ENCODE measurements at regions of chr7 and their contacts with region 1.

Region 1: DNA sequence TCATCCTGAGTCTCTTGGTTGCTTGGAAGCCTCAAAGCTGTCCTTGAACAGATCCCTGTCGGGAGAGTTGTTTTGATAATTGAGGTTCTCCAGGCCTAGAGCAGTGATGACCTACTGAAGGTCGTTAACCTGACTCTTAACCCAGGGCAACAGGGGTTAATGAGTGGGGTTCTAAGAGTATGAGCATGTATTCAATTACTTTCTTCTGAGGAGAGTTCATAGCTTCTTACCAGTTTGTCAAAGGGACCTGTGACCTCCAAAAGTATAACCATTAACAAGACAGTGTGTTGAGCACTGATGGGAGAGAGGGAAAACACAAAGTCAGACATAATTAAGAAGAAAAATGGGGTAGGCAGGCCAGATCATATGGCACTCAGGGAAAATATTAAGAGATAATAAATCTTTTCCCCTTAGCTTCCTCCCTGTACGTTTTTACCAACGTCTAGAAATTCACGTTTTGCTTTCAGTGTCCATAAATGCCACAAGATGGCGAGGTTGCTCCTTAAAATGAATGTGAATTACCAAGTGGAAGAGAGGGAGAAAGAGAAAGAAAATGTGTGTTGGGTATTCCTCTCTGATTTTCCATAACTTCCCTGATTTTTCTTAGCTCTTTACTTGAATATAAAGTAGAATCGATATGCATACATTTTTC is 97.6 kb downstream of the SUGCT start:
- DNase-seq: peak; percentile 34
- CTCF ChIP-seq: peak; percentile 64

Region 2: DNA sequence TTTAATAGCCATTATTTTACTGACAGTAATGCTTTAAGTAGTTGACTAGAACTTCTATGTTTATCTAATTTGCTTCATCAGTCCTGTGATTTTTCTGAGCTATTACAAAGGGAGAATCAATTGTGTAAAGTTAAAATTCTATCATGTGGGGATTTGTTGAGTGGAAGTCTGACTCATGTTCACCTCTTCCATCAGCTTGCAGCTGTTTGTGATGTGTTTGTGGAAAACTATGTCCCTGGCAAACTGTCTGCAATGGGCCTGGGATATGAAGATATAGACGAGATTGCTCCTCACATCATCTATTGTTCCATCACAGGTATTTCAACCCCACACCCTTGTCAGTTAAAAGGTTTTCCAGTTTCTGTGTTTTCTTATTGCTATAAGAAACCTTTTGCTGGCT is 37.6 kb before region 1 on chr7:
- CTCF ChIA-PET with region 1: no interaction called
- POLR2A ChIA-PET with region 1: no interaction called
- DNase-seq: no peak
- CTCF ChIP-seq: no peak

Region 3: GRCh38 chr7:40221836-40222235 is 10.5 kb before region 1 on chr7:
- CTCF ChIA-PET with region 1: interaction called, 17 read pairs
- POLR2A ChIA-PET with region 1: no interaction called
- DNase-seq: no peak
- CTCF ChIP-seq: no peak

Region 4: DNA sequence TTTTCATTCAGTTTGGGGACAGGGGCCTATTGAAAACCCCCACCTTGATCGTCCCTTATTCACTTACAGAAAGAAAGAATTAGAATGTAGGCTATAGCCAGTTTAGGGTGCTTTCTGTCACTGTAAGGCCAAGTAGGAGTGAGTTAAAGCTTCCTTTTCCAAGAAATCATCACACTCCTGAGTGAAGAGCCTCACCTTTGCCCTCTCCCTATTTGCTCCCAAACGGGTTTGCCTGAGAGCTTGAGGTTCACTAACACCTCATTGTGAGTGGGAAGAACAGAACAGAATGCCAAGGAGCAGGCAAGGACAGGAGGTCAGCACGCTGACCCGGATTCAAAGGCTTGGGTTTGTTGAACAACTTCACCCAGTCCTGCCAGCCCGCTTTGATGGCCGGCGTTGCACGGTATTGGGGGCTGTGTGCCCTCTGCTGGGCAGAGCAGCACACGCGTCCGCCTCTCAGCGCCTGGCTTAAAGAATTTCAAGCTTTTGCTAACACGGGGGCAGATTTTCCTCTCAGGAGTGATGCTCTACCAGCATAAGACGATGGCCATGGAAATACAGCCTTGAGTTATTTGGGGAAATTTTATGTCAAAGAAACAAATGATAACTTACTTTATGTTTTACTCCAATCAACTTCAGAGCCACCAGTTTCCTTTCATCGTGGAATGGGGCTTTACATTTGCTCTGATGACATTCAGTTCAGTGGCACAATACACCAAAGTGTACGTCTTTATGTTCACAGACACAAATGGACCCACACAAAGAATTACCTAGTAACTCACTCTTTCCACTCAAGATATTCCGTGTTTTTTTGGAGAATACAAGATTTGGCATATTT is 372.5 kb after region 1 on chr7:
- CTCF ChIA-PET with region 1: interaction called, 13 read pairs
- POLR2A ChIA-PET with region 1: no interaction called
- DNase-seq: peak; percentile 41
- CTCF ChIP-seq: peak; percentile 67

Region 5: GRCh38 chr7:40621592-40621998 is 389.2 kb after region 1 on chr7:
- CTCF ChIA-PET with region 1: no interaction called
- POLR2A ChIA-PET with region 1: no interaction called
- DNase-seq: no peak
- CTCF ChIP-seq: no peak

Region 6: DNA sequence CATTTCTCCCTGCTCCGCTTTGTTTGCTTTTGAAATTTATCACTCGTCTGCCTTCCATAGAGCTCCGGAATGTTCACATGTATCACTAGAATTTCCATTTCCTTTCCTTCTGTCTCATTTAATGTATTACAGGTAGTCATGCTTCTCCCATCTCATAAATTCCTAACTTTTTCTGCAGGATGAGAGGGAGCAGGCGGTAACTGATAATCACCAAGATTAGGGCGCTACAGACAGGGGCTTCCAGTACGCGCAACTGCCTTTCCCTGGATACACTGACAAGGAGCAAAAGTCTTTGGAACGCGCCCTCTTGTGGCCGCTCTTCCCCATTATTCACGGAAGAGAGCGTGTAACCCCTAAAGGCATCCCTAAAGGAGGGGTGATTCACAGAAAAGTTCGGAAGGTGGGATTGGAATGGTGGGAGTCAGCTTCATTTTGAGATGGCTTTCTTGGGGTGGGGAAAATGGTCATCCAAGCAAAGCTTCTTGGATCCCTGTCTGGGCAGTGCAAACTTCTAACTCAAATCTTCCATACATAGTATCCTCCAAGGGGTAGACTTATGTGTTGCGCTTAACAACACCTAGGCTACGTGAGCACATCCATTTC is 1464.0 kb after region 1 on chr7:
- CTCF ChIA-PET with region 1: interaction called, 11 read pairs
- POLR2A ChIA-PET with region 1: no interaction called
- DNase-seq: peak; percentile 31
- CTCF ChIP-seq: peak; percentile 65

Region 7: GRCh38 chr7:41705109-41705901 is 1472.9 kb after region 1 on chr7:
- CTCF ChIA-PET with region 1: interaction called, 21 read pairs
- POLR2A ChIA-PET with region 1: no interaction called
- DNase-seq: peak; percentile 89
- CTCF ChIP-seq: peak; percentile 88